ENCODE measurements at regions of chr7 and their contacts with region 1.

Region 1: GRCh38 chr7:44087911-44088838 is 5.8 kb upstream of the POLM start:
- DNase-seq: peak; percentile 92
- H3K4me3 ChIP-seq: no peak overlapping the region
- H3K27me3 ChIP-seq: no peaks in the 10 kb centered on the region
- CTCF ChIP-seq: no peak

Region 2: DNA sequence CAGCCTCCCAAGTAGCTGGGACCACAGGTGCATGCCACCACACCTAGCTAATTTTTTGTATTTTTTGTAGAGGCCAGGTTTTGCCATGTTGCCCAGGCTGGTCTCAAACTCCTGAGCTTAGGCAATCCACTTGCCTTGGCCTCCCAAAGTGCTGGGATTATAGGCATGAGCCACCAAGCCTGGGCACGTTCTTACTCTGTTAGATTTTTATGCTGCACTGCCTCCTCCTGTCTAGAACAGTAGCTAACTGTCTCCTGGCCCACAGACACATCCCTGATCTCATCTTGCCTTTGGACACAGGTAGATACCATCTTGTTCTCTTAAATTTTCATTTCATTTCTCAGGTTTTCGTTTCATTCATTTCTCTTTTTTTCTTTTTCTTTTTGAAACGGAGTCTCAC is 288.6 kb before region 1 on chr7:
- CTCF ChIA-PET with region 1: no interaction called
- POLR2A ChIA-PET with region 1: no interaction called
- DNase-seq: no peak
- H3K4me3 ChIP-seq: no peak overlapping the region
- H3K27me3 ChIP-seq: no peaks in the 10 kb centered on the region
- CTCF ChIP-seq: no peak

Region 3: GRCh38 chr7:44102307-44103171 is 14.4 kb after region 1 on chr7:
- CTCF ChIA-PET with region 1: interaction called, 6 read pairs
- POLR2A ChIA-PET with region 1: interaction called, 10 read pairs
- DNase-seq: peak; percentile 83
- H3K4me3 ChIP-seq: no peak overlapping the region
- H3K27me3 ChIP-seq: no peaks in the 10 kb centered on the region
- CTCF ChIP-seq: no peak

Region 4: DNA sequence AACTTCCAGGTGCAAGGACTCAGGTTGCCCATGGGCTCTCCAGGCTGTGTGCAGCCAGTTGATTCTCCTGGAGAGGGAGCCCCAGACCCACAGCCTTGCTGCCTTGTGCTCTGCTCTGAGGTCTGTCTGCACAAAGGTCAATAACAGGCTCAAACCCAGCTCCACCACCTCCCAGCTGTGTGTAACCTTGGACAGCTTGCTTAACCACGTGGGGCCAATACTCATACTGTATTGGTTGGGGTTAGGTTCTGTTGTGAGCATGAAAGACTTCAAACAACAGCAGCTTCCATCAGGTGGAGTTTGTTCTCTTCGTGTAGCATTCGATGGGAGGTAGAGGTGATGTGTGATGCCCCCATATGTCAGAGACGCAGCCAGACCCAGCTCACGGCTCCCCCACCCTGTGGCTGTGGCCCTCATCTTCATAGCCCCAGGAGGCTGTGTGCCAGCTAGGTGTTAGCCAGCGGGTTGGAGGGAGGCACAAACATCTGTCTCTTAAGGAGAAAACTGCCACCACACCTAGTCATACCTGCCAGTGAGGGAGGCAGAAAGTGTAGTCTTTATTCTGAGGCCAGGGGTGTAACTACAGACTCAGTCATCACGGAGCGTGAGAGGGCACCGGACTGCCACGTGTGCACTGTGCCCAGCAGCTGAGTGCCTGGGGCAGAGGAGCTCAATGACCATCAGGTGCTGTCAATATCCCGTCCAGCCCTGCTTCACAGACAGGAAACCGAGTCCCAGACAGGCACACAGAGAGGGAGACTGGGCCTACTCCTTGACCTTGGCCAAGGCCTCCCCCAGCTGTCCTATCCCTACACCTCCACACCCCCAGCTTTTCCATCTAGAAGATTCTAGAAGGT is 43.2 kb after region 1 on chr7:
- CTCF ChIA-PET with region 1: no interaction called
- POLR2A ChIA-PET with region 1: interaction called, 20 read pairs
- DNase-seq: no peak
- H3K4me3 ChIP-seq: no peak overlapping the region
- H3K27me3 ChIP-seq: no peaks in the 10 kb centered on the region
- CTCF ChIP-seq: no peak

Region 5: DNA sequence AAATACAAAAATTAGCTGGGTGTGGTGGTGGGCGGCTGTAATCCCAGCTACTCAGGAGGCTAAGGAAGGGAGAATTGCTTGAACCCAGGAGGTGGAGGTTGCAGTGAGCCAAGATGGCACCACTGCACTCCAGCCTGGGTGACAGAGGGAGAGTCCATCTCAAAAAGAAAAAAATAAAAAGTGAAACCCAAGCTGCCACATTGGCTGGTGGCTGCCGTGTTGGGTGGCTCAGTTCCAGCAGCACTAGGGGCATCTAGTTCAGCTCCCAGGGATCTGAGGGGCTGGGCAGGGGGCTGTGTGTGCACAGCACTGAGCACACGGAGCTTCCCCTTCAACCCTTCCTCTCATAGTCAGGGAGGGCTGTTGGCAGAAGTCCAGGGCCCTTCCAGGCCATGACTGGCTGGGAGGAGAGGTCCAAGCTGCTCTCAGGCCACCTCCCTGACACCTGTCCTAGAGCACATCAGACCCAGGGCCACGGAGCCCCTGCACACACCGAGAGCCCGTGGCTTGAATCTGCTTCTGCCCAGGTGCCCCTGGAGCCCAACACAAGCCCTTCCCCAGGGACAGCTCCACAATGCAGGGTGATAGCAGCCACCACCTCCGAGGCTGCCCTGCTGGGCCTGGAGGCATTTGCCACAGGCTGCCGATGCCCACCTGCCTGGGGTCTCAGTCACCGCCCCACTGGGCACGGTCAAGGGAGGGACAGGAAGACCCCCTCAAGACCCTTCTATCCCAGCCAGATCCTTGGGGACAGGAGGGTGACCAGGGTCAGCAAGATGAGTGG is 159.9 kb after region 1 on chr7:
- CTCF ChIA-PET with region 1: no interaction called
- POLR2A ChIA-PET with region 1: no interaction called
- DNase-seq: no peak
- H3K4me3 ChIP-seq: no peak overlapping the region
- H3K27me3 ChIP-seq: no peaks in the 10 kb centered on the region
- CTCF ChIP-seq: no peak